Upper lobe of right lung (tissue), 1 donor: ENCODE measurements at regions of chrX and their contacts with region 1.

Region 1: DNA sequence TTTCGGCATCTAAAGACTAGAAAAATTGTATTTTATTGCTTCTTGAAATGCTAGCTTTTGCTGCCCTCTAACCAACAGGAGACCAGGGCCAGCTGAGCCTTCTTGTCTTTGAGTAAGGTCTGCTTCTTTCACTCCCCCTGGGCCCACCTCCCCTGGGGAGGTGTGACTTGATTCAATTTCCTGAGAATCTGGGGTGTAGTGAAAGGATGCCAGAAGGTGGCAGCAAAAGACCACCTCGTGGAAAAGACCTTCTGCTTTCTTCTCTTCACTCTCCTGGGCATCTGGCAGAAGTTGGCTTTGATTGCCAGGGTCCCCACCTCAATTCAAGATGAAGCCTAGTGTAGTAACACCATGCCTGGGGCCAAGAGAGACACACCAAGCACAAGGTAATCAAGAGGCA is 96.5 kb upstream of the MAOA start:
- DNase-seq: no peak
- ATAC-seq: peak; percentile 86
- H3K4me3 ChIP-seq: no peak overlapping the region
- H3K27ac ChIP-seq: no peak overlapping the region
- H3K4me1 ChIP-seq: no peaks in the 10 kb centered on the region
- H3K27me3 ChIP-seq: no peaks in the 10 kb centered on the region
- CTCF ChIP-seq: peak; percentile 59

Region 2: DNA sequence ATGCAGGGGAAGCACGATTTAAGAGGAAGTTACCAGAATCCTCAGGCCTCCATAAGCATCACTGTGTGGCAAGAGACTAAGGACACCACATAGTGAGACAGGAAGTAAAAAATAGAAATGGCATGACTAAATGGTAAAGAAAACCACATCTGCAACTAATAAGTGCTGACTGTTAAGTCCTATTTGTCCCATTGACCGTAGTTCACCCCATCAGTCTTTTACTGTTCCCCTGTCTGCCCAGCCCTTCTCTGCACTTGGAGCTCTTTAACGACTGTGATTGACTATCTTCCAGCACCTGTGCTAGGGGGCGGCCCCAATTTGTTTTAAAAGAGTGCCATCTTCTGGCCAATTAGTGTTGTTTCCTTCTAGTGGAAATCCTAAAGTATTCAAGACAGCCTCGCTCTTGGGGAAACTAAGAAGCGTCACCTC is 190.6 kb after region 1 on chrX:
- intact Hi-C with region 1: loop called (anchors 5 kb)
- DNase-seq: no peak
- ATAC-seq: peak; percentile 90
- H3K4me3 ChIP-seq: no peak overlapping the region
- H3K27ac ChIP-seq: no peak overlapping the region
- H3K4me1 ChIP-seq: no peaks in the 10 kb centered on the region
- H3K27me3 ChIP-seq: no peaks in the 10 kb centered on the region
- CTCF ChIP-seq: peak; percentile 52